GM12878 (cell line): ENCODE measurements at regions of chr2 and their contacts with region 1.

Region 1: GRCh38 chr2:121649596-121650314 is 493 bp upstream of the CLASP1 start:
- DNase-seq: peak; percentile 89
- ATAC-seq: peak; percentile 95
- H3K4me3 ChIP-seq: peak overlapping the region; percentile 98
- H3K27ac ChIP-seq: peak overlapping the region; percentile 95
- H3K4me1 ChIP-seq: no peaks in the 10 kb centered on the region
- H3K27me3 ChIP-seq: no peaks in the 10 kb centered on the region
- CTCF ChIP-seq: no peak
- EP300 ChIP-seq: 0 out of 4 replicates have a peak, but pooled peaks have one; percentile 4 to 19
- POLR2A ChIP-seq: peak; percentile 74
- RAD21 ChIP-seq: 0 out of 2 replicates have a peak, but pooled peaks have one; percentile 1

Region 2: GRCh38 chr2:121519732-121520640 is 129.8 kb before region 1 on chr2:
- CTCF ChIA-PET with region 1: no interaction called
- POLR2A ChIA-PET with region 1: no interaction called
- RAD21 ChIA-PET with region 1: no interaction called
- SMC1A ChIA-PET with region 1: no interaction called
- in situ Hi-C with region 1: no loop called
- intact Hi-C with region 1: no loop called
- DNase-seq: no peak
- ATAC-seq: peak; percentile 52
- H3K4me3 ChIP-seq: no peak overlapping the region
- H3K27ac ChIP-seq: no peak overlapping the region
- H3K4me1 ChIP-seq: no peaks in the 10 kb centered on the region
- H3K27me3 ChIP-seq: no peaks in the 10 kb centered on the region
- CTCF ChIP-seq: no peak
- EP300 ChIP-seq: no peak
- POLR2A ChIP-seq: no peak
- RAD21 ChIP-seq: no peak

Region 3: GRCh38 chr2:121689356-121689755 is 39.6 kb after region 1 on chr2:
- CTCF ChIA-PET with region 1: no interaction called
- POLR2A ChIA-PET with region 1: no interaction called
- RAD21 ChIA-PET with region 1: no interaction called
- SMC1A ChIA-PET with region 1: no interaction called
- in situ Hi-C with region 1: loop called (anchors 5 kb)
- intact Hi-C with region 1: no loop called
- DNase-seq: no peak
- ATAC-seq: no peak
- H3K4me3 ChIP-seq: no peak overlapping the region
- H3K27ac ChIP-seq: no peak overlapping the region
- H3K4me1 ChIP-seq: no peaks in the 10 kb centered on the region
- H3K27me3 ChIP-seq: no peaks in the 10 kb centered on the region
- CTCF ChIP-seq: peak; percentile 6 to 19 (median 10); a peak in 1 of 6 replicates
- EP300 ChIP-seq: no peak
- POLR2A ChIP-seq: no peak
- RAD21 ChIP-seq: no peak

Region 4: GRCh38 chr2:121736462-121737341 is 86.9 kb after region 1 on chr2 and contains the start of gene NIFK:
- CTCF ChIA-PET with region 1: no interaction called
- POLR2A ChIA-PET with region 1: interaction called, 5 read pairs
- RAD21 ChIA-PET with region 1: no interaction called
- SMC1A ChIA-PET with region 1: no interaction called
- in situ Hi-C with region 1: no loop called
- intact Hi-C with region 1: loop called (anchors 1 kb)
- DNase-seq: peak; percentile 89
- ATAC-seq: peak; percentile 97
- H3K4me3 ChIP-seq: peak within 1 kb of the TSS; percentile 86
- H3K27ac ChIP-seq: peak within 1 kb of the TSS; percentile 90
- H3K4me1 ChIP-seq: no peaks in the 10 kb centered on the region; the same call in 1 of the 2 replicates
- H3K27me3 ChIP-seq: no peaks in the 10 kb centered on the region
- CTCF ChIP-seq: no peak
- EP300 ChIP-seq: no peak
- POLR2A ChIP-seq: peak; percentile 91
- RAD21 ChIP-seq: no peak
- polyA plus RNA-seq, gene NIFK: 156 to 171 TPM